ENCODE measurements at regions of chr1 and their contacts with region 1.

Region 1: GRCh38 chr1:2189459-2190425 is 4.8 kb downstream of the FAAP20 start:
- DNase-seq: peak; percentile 75 to 94 (median 88)
- ATAC-seq: peak; percentile 85 to 91
- H3K4me3 Mint-ChIP-seq: peak overlapping the region; percentile 74 to 88 (median 80)
- H3K27ac Mint-ChIP-seq: peak overlapping the region; percentile 87 to 99 (median 96)
- H3K4me1 Mint-ChIP-seq: peaks cover 6 to 28% (median 22%) of the 10 kb centered on the region in 4 donors
- H3K27me3 Mint-ChIP-seq: no peaks in the 10 kb centered on the region

Region 2: GRCh38 chr1:2133039-2133878 is 56.5 kb before region 1 on chr1:
- POLR2A ChIA-PET with region 1: no interaction called
- DNase-seq: peak; percentile 93 to 98 (median 96)
- ATAC-seq: peak; percentile 88 to 90
- H3K4me3 Mint-ChIP-seq: peak overlapping the region; percentile 79 to 90 (median 84)
- H3K27ac Mint-ChIP-seq: peak overlapping the region; percentile 5 to 97 (median 93)
- H3K4me1 Mint-ChIP-seq: peaks cover 7 to 47% (median 37%) of the 10 kb centered on the region in 4 donors
- H3K27me3 Mint-ChIP-seq: no peaks in the 10 kb centered on the region

Region 3: GRCh38 chr1:2148691-2149090 is 41.1 kb before region 1 on chr1:
- POLR2A ChIA-PET with region 1: no interaction called
- DNase-seq: peak in 8 of 10 donors; percentile 53 to 85 (median 66)
- ATAC-seq: peak; percentile 68 to 70
- H3K4me3 Mint-ChIP-seq: no peak overlapping the region
- H3K27ac Mint-ChIP-seq: no peak overlapping the region
- H3K4me1 Mint-ChIP-seq: peaks cover 9 to 42% (median 33%) of the 10 kb centered on the region in 4 donors
- H3K27me3 Mint-ChIP-seq: no peaks in the 10 kb centered on the region

Region 4: DNA sequence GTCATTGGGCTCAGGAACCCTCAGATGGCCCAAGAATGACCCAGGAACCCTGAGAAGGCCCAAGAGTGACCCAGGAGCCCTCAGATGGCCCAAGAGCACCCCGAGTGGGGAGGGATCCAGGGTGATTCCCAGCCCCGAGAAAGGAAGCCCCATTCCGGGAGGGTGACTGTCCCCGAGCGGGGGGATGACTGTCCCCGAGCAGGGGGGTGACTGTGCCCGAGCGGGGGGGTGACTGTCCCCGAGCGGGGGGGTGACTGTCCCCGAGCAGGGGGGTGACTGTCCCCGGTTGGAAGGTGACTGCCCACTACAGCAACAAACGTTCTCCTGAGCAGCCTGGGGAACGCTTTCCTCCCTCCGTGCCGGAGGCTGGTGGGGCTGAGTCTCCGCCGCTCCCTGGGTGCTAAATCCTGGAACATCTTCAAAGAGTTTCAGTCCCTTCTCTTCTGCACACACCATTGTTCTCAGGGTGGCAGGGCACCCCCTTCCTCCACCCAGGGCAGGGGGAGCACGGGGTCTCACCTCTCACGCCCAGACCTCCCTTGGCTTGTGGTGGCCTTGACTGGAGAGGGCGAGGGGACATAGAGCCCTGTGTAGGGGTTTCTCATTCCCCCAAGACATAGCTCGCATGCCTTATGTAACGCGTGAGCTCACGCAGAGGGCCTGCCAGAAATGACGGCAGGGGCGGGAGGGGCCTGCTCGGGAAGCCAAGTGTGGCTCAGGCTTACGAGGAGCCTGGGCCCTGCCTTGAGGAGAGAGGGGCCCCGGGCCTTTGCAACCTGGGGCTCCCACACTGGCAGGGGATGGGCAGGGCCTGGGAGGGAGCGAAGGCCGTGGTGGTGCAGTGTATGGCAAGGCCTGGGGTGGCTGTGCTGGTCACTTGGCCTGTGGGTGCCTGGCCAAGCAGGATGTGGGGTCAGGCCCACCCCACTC is 24.1 kb after region 1 on chr1:
- POLR2A ChIA-PET with region 1: no interaction called
- DNase-seq: no peak
- ATAC-seq: no peak
- H3K4me3 Mint-ChIP-seq: peak overlapping the region in 2 of 10 donors; percentile 26 to 55
- H3K27ac Mint-ChIP-seq: peak overlapping the region in 1 of 10 donors; percentile 32
- H3K4me1 Mint-ChIP-seq: peaks cover 0 to 6% (median 2%) of the 10 kb centered on the region in 4 donors
- H3K27me3 Mint-ChIP-seq: no peaks in the 10 kb centered on the region

Region 5: DNA sequence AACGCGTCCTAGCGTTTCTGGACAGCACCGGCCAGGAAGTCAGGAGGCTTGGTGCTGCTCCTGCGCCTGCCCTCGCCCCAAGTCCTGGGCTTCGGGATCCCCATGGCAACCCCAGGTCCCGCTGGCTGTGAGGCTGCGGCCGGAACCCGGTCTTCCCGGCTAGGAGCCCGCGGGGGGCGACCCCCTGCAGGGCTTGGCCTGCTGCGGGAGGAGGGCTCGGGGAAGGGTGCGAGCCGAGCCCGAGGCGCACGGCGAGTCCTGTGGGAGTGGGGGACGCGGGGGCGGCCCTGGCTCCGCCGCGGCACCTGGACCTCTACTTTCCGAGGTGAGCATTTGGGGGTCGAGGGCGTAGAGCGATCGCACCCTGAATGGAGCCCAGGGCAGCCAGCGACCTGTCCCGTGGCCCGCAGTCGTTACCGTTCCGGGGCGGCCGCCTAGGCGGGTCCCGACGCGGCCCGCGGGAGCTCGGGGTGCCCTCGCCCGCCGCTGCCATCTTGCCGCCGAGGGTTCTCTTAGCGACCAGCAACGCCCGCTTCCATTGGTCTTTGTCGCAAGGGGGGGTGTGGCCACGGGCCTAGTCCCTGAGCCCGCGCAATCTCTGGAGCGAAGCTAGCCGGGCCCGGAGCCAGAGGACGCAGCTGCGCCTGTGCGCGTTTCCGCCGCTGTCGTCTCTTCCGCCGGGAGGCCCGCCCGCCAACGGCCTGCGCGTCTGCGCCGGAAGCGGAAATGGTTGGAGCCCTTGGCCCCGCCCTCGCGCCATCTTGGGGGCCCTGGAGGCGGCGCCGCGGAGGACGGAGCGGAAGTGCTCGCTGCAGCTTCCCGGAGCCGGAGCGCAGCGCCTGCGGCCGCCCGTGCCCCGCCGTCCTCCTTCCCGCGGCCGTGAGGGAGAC is 201.5 kb after region 1 on chr1 and contains the starts of genes MORN1 and RER1:
- POLR2A ChIA-PET with region 1: interaction called, 11 read pairs
- DNase-seq: peak; percentile 90 to 100 (median 99)
- ATAC-seq: peak; percentile 95 to 96
- H3K4me3 Mint-ChIP-seq: peak within 1 kb of the TSS; percentile 82 to 94 (median 90)
- H3K27ac Mint-ChIP-seq: peak within 1 kb of the TSS; percentile 87 to 94 (median 92)
- H3K4me1 Mint-ChIP-seq: peaks cover 22 to 43% (median 37%) of the 10 kb centered on the region in 4 donors
- H3K27me3 Mint-ChIP-seq: no peaks in the 10 kb centered on the region
- polyA plus RNA-seq, gene MORN1: 4.3 to 7.1 (median 5.0) TPM
- polyA plus RNA-seq, gene RER1: 118 to 146 (median 126) TPM

Measured in naive thymus-derived CD8-positive, alpha-beta T cell (primary cell).